B cell (primary cell): ENCODE measurements at regions of chr16 and their contacts with region 1.

Region 1: DNA sequence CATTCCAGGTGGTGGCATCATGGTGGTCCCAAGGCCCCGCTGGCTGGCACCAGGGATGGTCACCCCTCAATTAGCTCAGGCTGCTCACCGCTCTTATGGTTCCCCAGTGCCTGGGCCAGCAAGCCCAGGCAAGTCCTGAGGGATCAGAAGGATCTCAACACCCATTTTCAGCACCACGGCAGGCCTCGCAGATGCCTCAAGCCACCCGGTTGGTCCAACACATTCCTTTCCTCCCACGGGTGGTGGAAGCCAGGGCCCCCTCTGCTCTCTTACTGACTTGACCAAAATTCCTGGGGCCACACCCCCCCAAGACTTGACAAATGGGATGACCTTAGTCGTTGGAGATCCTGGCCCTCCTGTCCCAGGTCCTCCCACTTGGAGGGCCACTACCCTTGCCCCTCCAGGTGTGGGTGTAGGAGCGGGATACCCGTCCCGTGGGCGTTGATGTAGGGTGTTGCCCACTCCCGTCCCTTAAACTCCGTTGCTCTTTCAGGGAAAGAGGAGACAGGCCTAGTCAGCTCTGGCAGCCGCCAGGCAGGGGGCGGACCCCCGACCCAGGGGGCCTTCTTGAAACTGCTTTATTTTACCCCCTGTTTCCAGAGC is 5.9 kb downstream of the ZNF205 start:
- DNase-seq: no peak
- ATAC-seq: no peak
- H3K4me3 ChIP-seq: no peak overlapping the region
- H3K4me3 Mint-ChIP-seq: no peak overlapping the region
- H3K27ac ChIP-seq: no peak overlapping the region
- H3K27ac Mint-ChIP-seq: no peak overlapping the region
- H3K4me1 ChIP-seq: peaks cover 0 to under 1% of the 10 kb centered on the region in 2 donors
- H3K4me1 Mint-ChIP-seq: no peaks in the 10 kb centered on the region
- H3K27me3 ChIP-seq: peaks cover 0 to 10% (median 3%) of the 10 kb centered on the region in 4 experiments
- H3K27me3 Mint-ChIP-seq: peaks cover 6% of the 10 kb centered on the region
- CTCF ChIP-seq: no peak

Region 2: GRCh38 chr16:3106205-3106928 is 11.9 kb before region 1 on chr16:
- CTCF ChIA-PET with region 1: interaction called, 6 read pairs
- POLR2A ChIA-PET with region 1: interaction called, 10 read pairs
- intact Hi-C with region 1: no loop called
- DNase-seq: peak; percentile 92
- ATAC-seq: peak; percentile 95
- H3K4me3 ChIP-seq: peak overlapping the region; percentile 70 to 85 (median 78)
- H3K4me3 Mint-ChIP-seq: peak overlapping the region; percentile 82
- H3K27ac ChIP-seq: peak overlapping the region; percentile 77 to 78
- H3K27ac Mint-ChIP-seq: peak overlapping the region; percentile 70
- H3K4me1 ChIP-seq: peaks cover 15 to 24% of the 10 kb centered on the region in 2 donors
- H3K4me1 Mint-ChIP-seq: peaks cover 18% of the 10 kb centered on the region
- H3K27me3 ChIP-seq: peaks cover 0 to under 1% (median 0%) of the 10 kb centered on the region in 4 experiments
- H3K27me3 Mint-ChIP-seq: no peaks in the 10 kb centered on the region
- CTCF ChIP-seq: no peak

Region 3: GRCh38 chr16:3282103-3282729 is 163.9 kb after region 1 on chr16:
- CTCF ChIA-PET with region 1: no interaction called
- POLR2A ChIA-PET with region 1: no interaction called
- intact Hi-C with region 1: no loop called
- DNase-seq: no peak
- ATAC-seq: peak; percentile 7
- H3K4me3 ChIP-seq: peak overlapping the region; percentile 78 to 100 (median 95)
- H3K4me3 Mint-ChIP-seq: peak overlapping the region; percentile 97
- H3K27ac ChIP-seq: peak overlapping the region; percentile 25 to 97
- H3K27ac Mint-ChIP-seq: peak overlapping the region; percentile 98
- H3K4me1 ChIP-seq: peaks cover 22 to 30% of the 10 kb centered on the region in 2 donors
- H3K4me1 Mint-ChIP-seq: peaks cover 37% of the 10 kb centered on the region
- H3K27me3 ChIP-seq: no peaks in the 10 kb centered on the region
- H3K27me3 Mint-ChIP-seq: no peaks in the 10 kb centered on the region
- CTCF ChIP-seq: no peak